BJ (cell line): ENCODE measurements at regions of chr2 and their contacts with region 1.

Region 1: GRCh38 chr2:237650455-237650850 is 23.1 kb downstream of the LRRFIP1 start:
- DNase-seq: no peak
- H3K4me3 ChIP-seq: no peak overlapping the region
- H3K27me3 ChIP-seq: no peaks in the 10 kb centered on the region
- CTCF ChIP-seq: no peak

Region 2: DNA sequence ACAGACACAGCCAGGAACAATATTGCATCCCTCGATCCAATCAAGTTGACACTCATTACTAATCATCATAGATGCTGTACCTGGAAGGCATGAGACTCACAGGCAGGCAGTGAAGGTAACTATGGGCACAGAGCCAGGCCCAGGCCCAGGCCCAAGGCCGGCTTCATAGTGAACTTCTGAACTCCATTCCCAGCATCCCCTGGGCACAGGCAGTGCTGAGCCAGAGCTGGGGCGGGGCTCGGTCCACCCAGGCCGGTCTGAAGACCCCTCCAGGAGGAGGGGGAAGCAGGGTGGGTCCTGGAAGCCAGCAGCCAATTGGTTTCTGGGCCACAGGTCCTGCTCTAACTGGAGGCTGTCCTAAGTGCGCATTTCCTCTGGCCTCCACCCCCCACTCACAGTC is 125.8 kb before region 1 on chr2:
- CTCF ChIA-PET with region 1: no interaction called
- POLR2A ChIA-PET with region 1: no interaction called
- DNase-seq: no peak
- H3K4me3 ChIP-seq: no peak overlapping the region
- H3K27me3 ChIP-seq: no peaks in the 10 kb centered on the region
- CTCF ChIP-seq: no peak

Region 3: GRCh38 chr2:237627441-237628246 is 22.8 kb before region 1 on chr2 and contains the start of gene LRRFIP1:
- CTCF ChIA-PET with region 1: no interaction called
- POLR2A ChIA-PET with region 1: interaction called, 12 read pairs
- DNase-seq: no peak
- H3K4me3 ChIP-seq: peak within 1 kb of the TSS; percentile 57
- H3K27me3 ChIP-seq: no peaks in the 10 kb centered on the region
- CTCF ChIP-seq: no peak
- polyA plus RNA-seq, gene LRRFIP1: 50.4 and 58.5 TPM in 2 replicates

Region 4: DNA sequence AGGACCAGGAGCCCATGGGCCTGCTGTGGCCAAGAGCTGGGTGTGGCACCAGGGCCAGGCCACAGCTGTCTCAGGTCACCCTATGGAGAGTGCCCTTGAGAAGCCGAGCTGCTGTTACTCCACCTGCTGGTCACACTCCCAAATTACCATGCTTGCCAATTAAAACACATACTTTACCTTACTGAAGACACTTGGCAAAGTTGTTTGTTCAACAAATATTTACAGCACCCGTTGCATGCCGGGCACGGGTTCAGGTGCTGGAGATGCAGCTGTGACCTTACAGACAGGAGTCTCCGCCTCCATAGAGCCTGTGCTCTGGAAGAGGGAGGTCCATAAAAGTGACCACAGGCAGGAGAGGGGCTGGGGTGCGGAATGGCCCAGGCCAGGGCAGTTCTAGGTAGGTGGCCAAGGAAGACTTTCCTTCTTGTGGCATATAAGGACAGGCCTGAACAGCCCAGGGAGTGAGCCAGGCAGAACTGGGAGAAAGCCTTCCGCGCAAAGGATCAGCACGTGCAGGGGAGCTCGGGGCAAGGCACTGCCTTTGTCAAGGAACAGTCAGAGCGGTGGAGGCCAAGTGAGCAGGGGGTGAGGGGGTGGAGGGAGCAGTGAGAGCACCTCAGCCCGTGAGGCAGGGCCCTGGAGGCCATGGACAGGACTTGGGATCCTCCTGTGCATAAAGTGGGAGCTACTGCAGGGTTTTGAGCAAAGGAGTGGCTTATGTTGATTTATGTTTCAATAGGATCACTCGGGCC is 124.5 kb after region 1 on chr2:
- CTCF ChIA-PET with region 1: no interaction called
- POLR2A ChIA-PET with region 1: no interaction called
- DNase-seq: no peak
- H3K4me3 ChIP-seq: no peak overlapping the region
- H3K27me3 ChIP-seq: no peaks in the 10 kb centered on the region
- CTCF ChIP-seq: peak; percentile 70